ENCODE measurements at regions of chr16 and their contacts with region 1.

Region 1: GRCh38 chr16:72832621-72833248 is 215.2 kb downstream of the ZFHX3 start:
- DNase-seq: peak; percentile 80
- H3K4me3 Mint-ChIP-seq: no peak overlapping the region
- H3K27ac Mint-ChIP-seq: no peak overlapping the region
- H3K4me1 Mint-ChIP-seq: peaks cover 4% of the 10 kb centered on the region
- H3K27me3 Mint-ChIP-seq: no peaks in the 10 kb centered on the region
- CTCF ChIP-seq: peak; percentile 89

Region 2: DNA sequence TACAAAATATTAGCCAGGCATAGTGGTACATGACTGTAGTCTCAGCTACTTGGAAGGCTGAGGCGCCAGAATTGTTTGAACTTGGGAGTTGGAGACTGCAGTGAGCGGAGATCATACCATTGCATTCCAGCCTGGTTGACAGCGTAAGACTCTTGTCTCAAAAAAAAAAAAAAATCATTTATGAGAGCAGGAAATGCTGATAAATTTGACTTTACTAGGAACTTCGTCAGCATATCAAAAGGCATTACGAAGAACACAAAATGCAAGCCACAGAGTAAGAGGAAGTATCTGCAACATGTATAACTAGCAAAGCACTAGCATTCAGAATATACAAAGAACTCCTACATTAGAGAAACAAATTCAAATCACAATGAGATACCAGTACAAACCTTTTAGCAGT is 64.1 kb before region 1 on chr16:
- CTCF ChIA-PET with region 1: no interaction called
- POLR2A ChIA-PET with region 1: no interaction called
- intact Hi-C with region 1: no loop called
- DNase-seq: no peak
- H3K4me3 Mint-ChIP-seq: no peak overlapping the region
- H3K27ac Mint-ChIP-seq: no peak overlapping the region
- H3K4me1 Mint-ChIP-seq: peaks cover 6% of the 10 kb centered on the region
- H3K27me3 Mint-ChIP-seq: no peaks in the 10 kb centered on the region
- CTCF ChIP-seq: no peak

Region 3: DNA sequence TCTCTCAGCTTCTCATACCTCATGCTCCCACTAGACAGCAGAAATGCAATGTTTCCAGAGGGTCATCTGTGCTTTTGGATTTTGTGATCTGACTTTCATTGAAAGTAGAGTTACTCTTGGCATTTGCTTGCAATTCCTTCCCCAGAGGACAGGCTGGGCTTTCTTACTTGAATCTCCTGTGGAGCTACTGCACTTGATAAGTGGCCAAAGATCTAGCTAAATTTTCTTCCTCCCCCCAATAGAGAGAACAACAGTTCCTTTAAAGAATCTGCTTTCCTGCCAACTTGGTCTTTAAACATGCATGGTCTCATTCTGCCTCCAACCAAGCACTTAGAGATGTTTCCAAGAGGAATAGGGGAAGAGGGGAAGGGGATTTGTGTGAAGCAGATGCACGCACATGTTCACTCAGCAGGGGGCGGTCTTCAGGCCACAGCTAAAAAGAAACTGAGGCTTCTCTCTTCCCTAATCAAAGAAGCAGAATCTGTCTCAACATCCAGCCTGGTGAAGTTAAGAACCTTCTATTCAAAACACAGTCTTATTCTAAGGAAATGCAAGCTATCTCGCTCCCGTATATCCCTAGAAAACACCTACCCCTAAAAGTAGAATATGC is 14.4 kb before region 1 on chr16:
- CTCF ChIA-PET with region 1: interaction called, 16 read pairs
- POLR2A ChIA-PET with region 1: no interaction called
- intact Hi-C with region 1: no loop called
- DNase-seq: no peak
- H3K4me3 Mint-ChIP-seq: no peak overlapping the region
- H3K27ac Mint-ChIP-seq: no peak overlapping the region
- H3K4me1 Mint-ChIP-seq: no peaks in the 10 kb centered on the region
- H3K27me3 Mint-ChIP-seq: no peaks in the 10 kb centered on the region
- CTCF ChIP-seq: no peak

Region 4: GRCh38 chr16:72884037-72884436 is 51.3 kb after region 1 on chr16:
- CTCF ChIA-PET with region 1: interaction called, 11 read pairs
- POLR2A ChIA-PET with region 1: no interaction called
- intact Hi-C with region 1: no loop called
- DNase-seq: peak; percentile 31
- H3K4me3 Mint-ChIP-seq: no peak overlapping the region
- H3K27ac Mint-ChIP-seq: no peak overlapping the region
- H3K4me1 Mint-ChIP-seq: peaks cover 8% of the 10 kb centered on the region
- H3K27me3 Mint-ChIP-seq: no peaks in the 10 kb centered on the region
- CTCF ChIP-seq: no peak

Region 5: DNA sequence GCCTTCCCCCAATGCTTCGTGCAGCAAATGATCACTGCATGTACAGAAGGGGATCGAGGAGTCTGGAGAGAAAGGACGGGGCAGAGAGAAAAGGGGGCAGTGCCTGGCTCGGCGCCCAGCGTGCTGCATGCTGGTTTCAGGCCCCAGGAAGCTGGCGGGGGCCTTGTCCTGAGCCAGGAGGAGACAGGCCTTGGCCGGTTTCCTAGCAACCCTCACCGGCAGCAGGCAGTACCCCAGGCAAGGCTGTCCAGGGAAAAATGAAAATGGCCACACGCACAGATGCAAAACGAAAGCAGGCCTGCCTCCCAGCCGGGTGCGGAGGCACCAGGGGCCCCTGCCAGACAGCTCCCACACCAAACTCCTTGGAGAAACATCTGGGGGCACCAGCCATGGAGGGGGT is 88.9 kb after region 1 on chr16:
- CTCF ChIA-PET with region 1: no interaction called
- POLR2A ChIA-PET with region 1: no interaction called
- intact Hi-C with region 1: no loop called
- DNase-seq: no peak
- H3K4me3 Mint-ChIP-seq: no peak overlapping the region
- H3K27ac Mint-ChIP-seq: no peak overlapping the region
- H3K4me1 Mint-ChIP-seq: no peaks in the 10 kb centered on the region
- H3K27me3 Mint-ChIP-seq: no peaks in the 10 kb centered on the region
- CTCF ChIP-seq: no peak

Region 6: DNA sequence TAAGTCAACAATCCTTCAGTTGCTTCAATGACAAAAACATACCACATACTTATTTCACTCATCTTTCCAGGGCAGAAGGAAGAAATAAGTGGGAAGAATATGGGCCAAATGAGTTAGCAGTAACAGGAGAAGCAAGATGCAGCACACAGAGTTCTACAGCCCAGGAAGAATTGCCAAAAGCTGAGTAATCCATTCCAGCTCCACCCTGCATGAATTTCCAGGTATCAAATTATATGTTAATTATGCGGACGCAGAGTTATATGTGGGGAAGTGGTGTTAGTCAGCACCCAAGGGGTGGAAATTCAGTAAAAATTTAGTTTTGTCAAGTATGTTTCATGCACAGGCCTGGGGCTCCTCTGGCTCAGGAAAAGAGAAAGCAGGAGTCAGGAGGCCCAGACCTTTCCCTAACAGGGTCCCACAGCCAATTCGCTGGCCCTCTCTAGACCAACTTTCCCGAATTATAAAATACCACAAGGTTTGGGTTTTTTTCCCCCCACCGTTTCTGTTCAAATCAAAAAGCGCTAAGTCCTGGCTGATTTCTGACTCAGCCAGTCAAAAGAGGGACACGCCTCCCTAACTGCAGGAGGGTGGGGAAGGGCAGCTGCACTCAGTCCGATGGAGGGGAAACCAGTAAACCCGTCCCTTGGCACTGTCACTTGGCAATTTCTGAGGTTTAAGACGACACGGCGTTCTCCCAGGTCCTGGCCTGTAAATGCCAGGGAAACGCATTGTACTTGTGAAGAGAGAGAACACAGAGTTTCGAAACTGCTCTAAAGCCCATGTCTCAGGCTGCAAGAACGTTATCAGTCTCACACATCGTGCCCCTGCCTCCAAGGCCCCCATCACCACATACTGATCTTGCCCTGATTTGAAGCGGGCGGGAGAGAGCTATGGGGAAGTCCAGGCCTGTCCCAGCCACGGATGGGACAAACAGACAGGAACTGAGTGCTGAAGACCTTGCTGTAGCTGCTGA is 157.1 kb after region 1 on chr16:
- CTCF ChIA-PET with region 1: interaction called, 22 read pairs
- POLR2A ChIA-PET with region 1: interaction called, 3 read pairs
- intact Hi-C with region 1: no loop called
- DNase-seq: peak; percentile 94
- H3K4me3 Mint-ChIP-seq: peak overlapping the region; percentile 73
- H3K27ac Mint-ChIP-seq: peak overlapping the region; percentile 95
- H3K4me1 Mint-ChIP-seq: peaks cover 73% of the 10 kb centered on the region
- H3K27me3 Mint-ChIP-seq: no peaks in the 10 kb centered on the region
- CTCF ChIP-seq: no peak

Region 7: DNA sequence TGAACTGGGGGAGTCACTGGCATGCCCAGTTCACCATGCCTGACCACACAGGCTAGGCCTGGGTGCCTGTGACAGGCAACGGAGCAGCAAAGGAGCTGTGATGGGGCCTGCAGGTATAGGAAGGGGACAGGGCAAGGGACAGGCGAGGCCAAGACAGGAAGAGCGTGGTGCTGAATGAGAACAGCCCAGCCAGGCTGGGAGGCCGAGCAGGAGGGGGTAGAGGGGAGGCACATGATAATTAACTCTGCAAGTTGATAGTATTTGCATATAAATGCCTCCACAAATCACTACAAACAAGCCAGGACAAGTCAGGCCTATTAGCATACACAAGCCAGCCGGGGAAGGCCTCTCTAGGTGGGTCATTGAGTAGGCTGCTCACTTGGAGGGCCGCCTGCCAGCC is 207.4 kb after region 1 on chr16:
- CTCF ChIA-PET with region 1: interaction called, 15 read pairs
- POLR2A ChIA-PET with region 1: no interaction called
- intact Hi-C with region 1: no loop called
- DNase-seq: no peak
- H3K4me3 Mint-ChIP-seq: no peak overlapping the region
- H3K27ac Mint-ChIP-seq: peak overlapping the region; percentile 63
- H3K4me1 Mint-ChIP-seq: peaks cover 35% of the 10 kb centered on the region
- H3K27me3 Mint-ChIP-seq: no peaks in the 10 kb centered on the region
- CTCF ChIP-seq: no peak

Region 8: GRCh38 chr16:73172241-73172972 is 339.7 kb after region 1 on chr16:
- CTCF ChIA-PET with region 1: interaction called, 11 read pairs
- POLR2A ChIA-PET with region 1: no interaction called
- intact Hi-C with region 1: loop called (anchors 5 kb)
- DNase-seq: peak; percentile 87
- H3K4me3 Mint-ChIP-seq: no peak overlapping the region
- H3K27ac Mint-ChIP-seq: no peak overlapping the region
- H3K4me1 Mint-ChIP-seq: peaks cover 37% of the 10 kb centered on the region
- H3K27me3 Mint-ChIP-seq: no peaks in the 10 kb centered on the region
- CTCF ChIP-seq: peak; percentile 42

Region 9: GRCh38 chr16:73202161-73202729 is 369.5 kb after region 1 on chr16:
- CTCF ChIA-PET with region 1: interaction called, 48 read pairs
- POLR2A ChIA-PET with region 1: no interaction called
- intact Hi-C with region 1: no loop called
- DNase-seq: peak; percentile 57
- H3K4me3 Mint-ChIP-seq: no peak overlapping the region
- H3K27ac Mint-ChIP-seq: no peak overlapping the region
- H3K4me1 Mint-ChIP-seq: peaks cover 11% of the 10 kb centered on the region
- H3K27me3 Mint-ChIP-seq: no peaks in the 10 kb centered on the region
- CTCF ChIP-seq: no peak